Endothelial cell of umbilical vein (primary cell): ENCODE measurements at regions of chr9 and their contacts with region 1.

Region 1: GRCh38 chr9:76166526-76166925 is 227.7 kb downstream of the RFK start:
- DNase-seq: peak; percentile 6
- H3K4me3 ChIP-seq: no peak overlapping the region
- H3K27ac ChIP-seq: no peak overlapping the region
- H3K4me1 ChIP-seq: no peaks in the 10 kb centered on the region
- H3K27me3 ChIP-seq: no peaks in the 10 kb centered on the region
- CTCF ChIP-seq: no peak
- POLR2A ChIP-seq: no peak

Region 2: GRCh38 chr9:76181020-76181641 is 14.6 kb after region 1 on chr9:
- CTCF ChIA-PET with region 1: interaction called, 5 read pairs
- POLR2A ChIA-PET with region 1: no interaction called
- dilution Hi-C with region 1: no loop called
- intact Hi-C with region 1: loop called (anchors 1 kb)
- DNase-seq: no peak
- H3K4me3 ChIP-seq: no peak overlapping the region
- H3K27ac ChIP-seq: no peak overlapping the region
- H3K4me1 ChIP-seq: no peaks in the 10 kb centered on the region
- H3K27me3 ChIP-seq: no peaks in the 10 kb centered on the region
- CTCF ChIP-seq: no peak
- POLR2A ChIP-seq: no peak

Region 3: DNA sequence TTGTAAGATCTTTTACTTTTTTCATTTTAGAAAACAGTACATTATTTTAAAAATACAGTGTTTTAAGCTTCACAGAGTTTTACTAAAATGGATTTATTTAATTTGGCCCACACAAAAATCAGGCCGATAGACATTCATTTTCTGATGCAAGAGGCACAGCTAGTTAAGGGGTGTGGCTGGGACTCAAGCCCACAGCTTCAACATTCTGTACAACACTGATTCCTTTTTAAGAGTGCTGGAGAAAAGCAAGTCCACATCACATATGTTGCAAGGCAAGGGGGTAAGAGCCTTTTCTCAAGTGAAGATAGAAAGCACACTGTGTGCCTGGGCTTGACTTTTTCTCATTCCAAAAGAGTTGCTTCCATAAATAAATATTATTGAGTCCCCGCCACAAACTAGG is 31.8 kb after region 1 on chr9:
- CTCF ChIA-PET with region 1: no interaction called
- POLR2A ChIA-PET with region 1: no interaction called
- dilution Hi-C with region 1: no loop called
- intact Hi-C with region 1: no loop called
- DNase-seq: no peak
- H3K4me3 ChIP-seq: no peak overlapping the region
- H3K27ac ChIP-seq: no peak overlapping the region
- H3K4me1 ChIP-seq: no peaks in the 10 kb centered on the region
- H3K27me3 ChIP-seq: peaks cover 2 to 10% of the 10 kb centered on the region in 2 experiments
- CTCF ChIP-seq: no peak
- POLR2A ChIP-seq: no peak